AG04450 (cell line): ENCODE measurements at regions of chr17 and their contacts with region 1.

Region 1: GRCh38 chr17:74770498-74771318 is 5.4 kb downstream of the NAT9 start:
- DNase-seq: no peak
- H3K4me3 ChIP-seq: no peak overlapping the region
- H3K27ac ChIP-seq: no peak overlapping the region
- H3K27me3 ChIP-seq: no peaks in the 10 kb centered on the region
- CTCF ChIP-seq: peak; percentile 77

Region 2: GRCh38 chr17:74203439-74204240 is 567.1 kb before region 1 on chr17 and contains the start of gene RPL38:
- CTCF ChIA-PET with region 1: interaction called, 12 read pairs
- POLR2A ChIA-PET with region 1: no interaction called
- DNase-seq: peak; percentile 94
- H3K4me3 ChIP-seq: peak within 1 kb of the TSS; percentile 96
- H3K27ac ChIP-seq: peak within 1 kb of the TSS; percentile 88
- H3K27me3 ChIP-seq: peaks cover 13% of the 10 kb centered on the region
- CTCF ChIP-seq: peak; percentile 97
- polyA plus RNA-seq, gene RPL38: 2,243 and 2,383 TPM in 2 replicates

Region 3: GRCh38 chr17:74744714-74745547 is 25.8 kb before region 1 on chr17:
- CTCF ChIA-PET with region 1: interaction called, 75 read pairs
- POLR2A ChIA-PET with region 1: no interaction called
- DNase-seq: no peak
- H3K4me3 ChIP-seq: 0 out of 2 replicates have a peak overlapping the region, but pooled peaks have one; percentile 3
- H3K27ac ChIP-seq: no peak overlapping the region
- H3K27me3 ChIP-seq: peaks cover 7% of the 10 kb centered on the region
- CTCF ChIP-seq: peak; percentile 99

Region 4: DNA sequence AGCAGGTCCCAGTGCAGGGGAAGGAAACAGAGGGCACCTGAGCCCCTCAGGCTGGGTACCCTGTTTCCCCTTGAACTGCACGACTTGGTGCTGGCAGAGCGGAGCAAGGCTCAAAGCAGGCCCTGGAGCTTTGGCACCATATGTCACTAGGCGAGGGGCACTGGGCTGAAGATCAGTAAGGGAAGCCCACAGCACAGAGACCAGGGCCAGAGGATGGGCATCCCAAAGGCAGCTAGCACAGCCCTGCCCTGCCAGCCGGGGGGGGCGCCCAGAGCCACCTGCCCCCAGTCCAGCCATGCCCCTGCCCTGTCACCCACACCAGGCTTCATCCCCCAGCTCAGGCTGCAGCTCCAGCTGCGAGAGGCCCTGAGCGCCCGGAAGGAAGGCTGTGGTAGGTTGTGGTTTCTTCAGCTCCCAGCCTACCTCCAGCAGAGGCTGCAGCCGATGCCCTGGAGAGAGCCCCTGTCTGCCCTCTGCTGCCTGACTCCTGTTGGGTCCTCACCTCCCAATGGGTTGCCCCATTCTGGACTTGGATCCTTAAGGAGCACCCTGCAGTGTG is 11.4 kb before region 1 on chr17:
- CTCF ChIA-PET with region 1: interaction called, 10 read pairs
- POLR2A ChIA-PET with region 1: interaction called, 5 read pairs
- DNase-seq: no peak
- H3K4me3 ChIP-seq: no peak overlapping the region
- H3K27ac ChIP-seq: no peak overlapping the region
- H3K27me3 ChIP-seq: no peaks in the 10 kb centered on the region
- CTCF ChIP-seq: no peak